ENCODE measurements at regions of chr5 and their contacts with region 1.

Region 1: DNA sequence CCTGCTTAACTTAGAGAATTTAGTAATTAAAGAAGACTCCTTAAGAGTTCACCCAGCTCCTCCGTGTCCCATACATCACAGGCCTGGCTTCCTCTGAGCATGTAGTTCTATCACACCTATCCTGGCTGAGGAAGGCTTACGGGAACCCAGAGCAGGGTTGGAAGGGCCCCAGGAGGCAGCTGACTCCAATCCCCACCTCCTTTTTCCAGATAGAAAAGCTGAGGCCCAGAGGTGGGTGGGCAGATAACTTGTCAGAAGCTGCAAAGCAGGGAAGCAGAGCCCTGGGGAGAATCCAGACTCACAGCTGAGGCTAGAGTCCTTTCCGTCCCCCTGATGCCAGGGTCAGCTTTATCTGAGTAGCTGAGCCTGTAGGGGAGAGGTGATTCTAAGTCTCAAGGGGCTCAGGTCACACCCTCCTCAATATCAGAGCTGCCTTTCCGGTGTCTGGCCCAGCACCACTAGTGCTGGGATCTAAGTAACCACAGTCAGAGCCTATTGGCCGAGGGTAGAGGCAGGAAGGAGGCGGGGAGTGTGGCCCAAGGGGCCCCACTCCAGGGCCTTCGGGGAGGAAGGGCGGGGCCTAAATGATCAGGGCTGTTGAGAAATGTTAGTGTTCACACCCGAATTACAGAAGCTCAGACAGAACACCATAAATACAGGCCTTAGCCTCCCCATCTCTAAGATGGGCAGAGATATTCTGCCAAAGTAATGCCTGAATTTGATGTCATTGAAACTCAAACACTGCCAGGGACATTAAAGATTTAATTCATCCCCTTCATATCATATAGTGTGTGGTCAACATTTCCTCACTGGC is 9.9 kb downstream of the CCDC69 start:
- DNase-seq: peak; percentile 95
- H3K4me3 Mint-ChIP-seq: peak overlapping the region; percentile 83
- H3K27ac Mint-ChIP-seq: peak overlapping the region; percentile 98
- H3K4me1 Mint-ChIP-seq: peaks cover 76% of the 10 kb centered on the region
- H3K27me3 Mint-ChIP-seq: no peaks in the 10 kb centered on the region

Region 2: DNA sequence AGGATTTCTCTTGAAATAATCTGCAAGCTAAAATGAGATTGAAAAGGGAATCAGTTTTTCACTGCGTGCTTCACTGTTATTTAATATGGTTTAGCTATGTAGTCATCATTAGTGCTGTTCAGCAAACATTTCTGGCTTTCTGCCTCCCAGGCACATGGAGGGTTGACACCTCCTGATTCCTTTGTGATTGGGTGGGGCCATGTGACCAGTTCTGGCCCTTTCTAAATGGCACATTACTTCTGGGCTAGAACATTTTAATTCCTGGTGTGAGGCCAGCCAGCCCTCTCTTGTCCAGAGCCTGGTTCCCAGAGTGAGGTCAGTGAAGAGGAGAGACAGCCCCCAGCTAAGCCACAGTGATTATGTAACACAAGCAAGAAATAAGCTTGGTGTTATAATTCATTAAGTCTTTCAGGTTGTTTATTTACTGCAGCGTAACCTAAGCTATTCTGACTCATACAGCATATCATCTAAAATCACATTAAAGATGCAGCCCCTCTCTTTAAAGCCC is 893.9 kb before region 1 on chr5:
- CTCF ChIA-PET with region 1: no interaction called
- intact Hi-C with region 1: no loop called
- DNase-seq: no peak
- H3K4me3 Mint-ChIP-seq: no peak overlapping the region
- H3K27ac Mint-ChIP-seq: no peak overlapping the region
- H3K4me1 Mint-ChIP-seq: peaks cover 3% of the 10 kb centered on the region
- H3K27me3 Mint-ChIP-seq: no peaks in the 10 kb centered on the region

Region 3: GRCh38 chr5:151150471-151151262 is 63.3 kb before region 1 on chr5:
- CTCF ChIA-PET with region 1: no interaction called
- intact Hi-C with region 1: loop called (anchors 1 kb)
- DNase-seq: peak; percentile 91
- H3K4me3 Mint-ChIP-seq: peak overlapping the region; percentile 64
- H3K27ac Mint-ChIP-seq: peak overlapping the region; percentile 90
- H3K4me1 Mint-ChIP-seq: peaks cover 94% of the 10 kb centered on the region
- H3K27me3 Mint-ChIP-seq: no peaks in the 10 kb centered on the region

Region 4: DNA sequence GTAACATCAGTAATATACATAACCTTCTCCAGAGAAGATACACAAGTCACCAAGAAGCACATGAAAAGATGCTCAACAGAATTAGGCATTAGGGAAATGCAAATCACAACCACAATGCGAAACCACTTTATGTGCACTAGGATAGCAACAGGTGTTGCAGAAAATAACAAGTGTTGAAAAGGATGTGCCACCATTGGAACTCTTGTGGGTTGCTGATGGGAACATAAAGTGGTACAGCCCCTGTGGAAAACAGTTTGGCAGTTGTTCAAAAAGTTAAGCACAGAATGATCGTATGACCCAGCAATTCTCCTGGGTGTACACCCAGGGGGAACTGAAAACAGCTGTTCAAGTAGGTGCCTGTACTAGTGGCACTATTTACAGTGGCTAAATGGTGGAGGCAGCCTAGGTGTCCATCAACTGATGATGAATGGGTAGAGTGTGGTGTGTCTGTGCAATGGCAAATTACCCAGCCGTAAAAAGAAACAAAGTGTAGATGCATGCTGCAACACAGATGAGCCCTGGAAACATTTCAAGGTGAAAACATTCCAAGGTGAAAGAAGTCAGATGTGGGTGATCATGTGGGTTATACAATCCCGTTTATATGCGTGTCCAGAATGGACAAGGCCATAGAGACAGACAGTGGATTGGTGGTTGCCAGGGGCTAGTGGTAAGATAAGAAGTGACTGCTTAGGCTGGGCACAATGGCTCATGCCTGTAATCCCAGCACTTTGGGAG is 17.3 kb before region 1 on chr5:
- CTCF ChIA-PET with region 1: interaction called, 5 read pairs
- intact Hi-C with region 1: loop called (anchors 2 kb)
- DNase-seq: peak; percentile 40
- H3K4me3 Mint-ChIP-seq: no peak overlapping the region
- H3K27ac Mint-ChIP-seq: peak overlapping the region; percentile 44
- H3K4me1 Mint-ChIP-seq: peaks cover 48% of the 10 kb centered on the region
- H3K27me3 Mint-ChIP-seq: no peaks in the 10 kb centered on the region

Region 5: GRCh38 chr5:151252762-151253604 is 39.0 kb after region 1 on chr5 and contains the start of gene GM2A:
- CTCF ChIA-PET with region 1: interaction called, 4 read pairs
- intact Hi-C with region 1: loop called (anchors 1 kb)
- DNase-seq: peak; percentile 99
- H3K4me3 Mint-ChIP-seq: peak within 1 kb of the TSS; percentile 89
- H3K27ac Mint-ChIP-seq: peak within 1 kb of the TSS; percentile 90
- H3K4me1 Mint-ChIP-seq: peaks cover 43% of the 10 kb centered on the region
- H3K27me3 Mint-ChIP-seq: no peaks in the 10 kb centered on the region
- total RNA-seq, gene GM2A: 21.1 to 21.8 TPM

Region 6: DNA sequence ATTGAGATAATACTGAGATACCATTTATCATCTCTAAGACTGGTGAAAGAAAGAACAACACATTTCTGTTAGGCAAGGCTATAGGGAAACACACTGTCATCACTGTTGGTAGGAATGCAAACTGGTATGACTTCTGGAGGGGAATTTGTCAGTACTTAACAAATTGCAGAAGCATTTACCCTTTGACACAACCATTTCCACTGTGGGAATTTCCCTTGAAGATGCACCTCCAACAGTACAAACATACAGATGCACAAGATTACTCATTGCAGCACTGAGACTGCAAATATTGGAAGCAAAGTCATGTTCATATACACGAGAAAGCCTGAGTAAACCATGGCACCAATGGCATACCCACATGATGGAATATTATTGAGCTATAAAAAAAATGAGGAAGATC is 56.6 kb after region 1 on chr5:
- CTCF ChIA-PET with region 1: no interaction called
- intact Hi-C with region 1: loop called (anchors 1 kb)
- DNase-seq: peak; percentile 52
- H3K4me3 Mint-ChIP-seq: no peak overlapping the region
- H3K27ac Mint-ChIP-seq: no peak overlapping the region
- H3K4me1 Mint-ChIP-seq: no peaks in the 10 kb centered on the region
- H3K27me3 Mint-ChIP-seq: no peaks in the 10 kb centered on the region